ENCODE measurements at regions of chr3 and their contacts with region 1.

Region 1: GRCh38 chr3:195106418-195106906 is 164.5 kb downstream of the XXYLT1 start:
- DNase-seq: peak; percentile 45 to 83 (median 64)
- H3K4me3 ChIP-seq: peak overlapping the region in 58 of 59 donors; percentile 7 to 62 (median 38)
- H3K27ac ChIP-seq: peak overlapping the region in 8 of 59 donors; percentile 14 to 67 (median 40)
- H3K27me3 ChIP-seq: no peaks in the 10 kb centered on the region
- CTCF ChIP-seq: peak; percentile 95 to 100 (median 99)

Region 2: DNA sequence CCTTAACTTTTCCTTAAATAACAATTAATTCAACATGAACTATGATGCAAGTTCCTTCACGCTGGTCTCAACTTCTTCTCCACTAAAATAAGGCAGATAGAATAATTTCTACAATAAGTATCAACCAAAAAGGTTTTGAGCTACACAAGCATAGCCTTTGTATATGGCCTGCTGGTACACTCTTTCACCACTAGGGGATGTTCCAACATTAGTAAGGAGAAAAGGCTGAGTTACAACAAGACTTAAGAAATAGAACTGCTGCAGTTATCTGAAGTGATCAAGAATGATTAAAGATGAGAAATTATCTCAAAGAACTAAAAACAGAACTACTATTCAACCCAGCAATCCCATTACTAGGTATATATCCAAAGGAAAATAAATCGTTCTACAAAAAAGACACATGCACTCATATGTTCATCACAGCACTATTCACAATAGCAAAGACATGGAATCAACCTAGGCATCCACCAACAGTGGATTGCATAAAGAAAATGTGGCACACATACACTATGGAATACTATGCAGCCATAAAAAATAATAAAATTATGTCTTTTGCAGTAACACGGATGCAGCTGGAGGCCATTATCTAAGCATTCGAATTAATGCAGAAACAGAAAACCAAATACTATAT is 634.1 kb before region 1 on chr3:
- intact Hi-C with region 1: loop called in 1 of 2 experiments (anchors 10 kb)
- DNase-seq: peak in 1 of 10 donors; percentile 23
- H3K4me3 ChIP-seq: no peak overlapping the region
- H3K27ac ChIP-seq: no peak overlapping the region
- H3K27me3 ChIP-seq: no peaks in the 10 kb centered on the region
- CTCF ChIP-seq: peak; percentile 89 to 99 (median 95)

Region 3: GRCh38 chr3:194769020-194769643 is 337.3 kb before region 1 on chr3:
- intact Hi-C with region 1: loop called in 1 of 2 experiments (anchors 10 kb)
- DNase-seq: peak; percentile 52 to 97 (median 91)
- H3K4me3 ChIP-seq: peak overlapping the region; percentile 30 to 72 (median 57)
- H3K27ac ChIP-seq: peak overlapping the region in 26 of 59 donors; percentile 3 to 77 (median 45)
- H3K27me3 ChIP-seq: peaks cover 0 to 8% (median 0%) of the 10 kb centered on the region in 45 donors
- CTCF ChIP-seq: peak in 9 of 56 donors; percentile 1 to 29 (median 13)

Measured in dorsolateral prefrontal cortex (tissue), 120 donors.